ENCODE measurements at regions of chr19 and their contacts with region 1.

Region 1: DNA sequence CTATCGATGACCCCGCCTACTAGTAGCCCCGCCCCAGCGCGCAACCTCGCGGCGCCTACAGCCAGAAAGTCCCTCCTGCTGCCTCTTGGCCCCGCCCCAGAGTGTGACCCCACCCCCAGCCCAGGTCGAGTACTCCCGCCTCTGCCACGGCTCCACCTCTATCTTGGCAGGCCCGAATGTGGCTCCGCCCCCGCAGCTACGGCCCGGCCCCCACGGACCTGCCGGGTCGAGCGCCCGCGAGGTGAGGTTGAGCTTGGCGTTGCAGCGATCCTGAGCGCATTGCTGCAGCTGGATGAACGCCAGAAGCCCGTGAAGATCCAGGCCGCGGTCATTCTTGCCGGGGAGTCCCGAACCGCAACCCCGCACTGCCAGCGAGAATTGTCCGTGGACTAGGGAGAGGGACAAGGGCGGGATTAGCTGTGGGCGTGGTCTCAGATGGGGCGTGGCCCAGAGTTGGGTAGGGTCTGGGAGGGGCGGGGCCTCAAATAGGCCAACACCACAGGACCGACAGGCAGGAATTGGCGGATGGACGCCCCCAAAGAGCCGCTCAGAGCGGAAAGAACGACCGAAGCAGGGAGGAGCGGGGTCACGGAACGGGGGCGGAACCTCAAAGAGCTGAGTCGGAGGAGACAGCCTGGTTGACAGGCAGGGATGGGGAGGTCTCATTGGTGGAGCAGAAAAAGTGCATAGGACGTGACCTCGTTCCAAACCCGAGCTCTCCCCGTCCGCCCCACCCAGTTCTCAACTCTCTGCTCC is 1.8 kb downstream of the LYPD3 start:
- DNase-seq: peak; percentile 99
- H3K4me3 ChIP-seq: peak overlapping the region; percentile 57 to 68 (median 64)
- H3K27ac ChIP-seq: peak overlapping the region; percentile 66 to 92 (median 87)
- H3K4me1 ChIP-seq: peaks cover 7 to 33% (median 20%) of the 10 kb centered on the region in 4 donors
- H3K27me3 ChIP-seq: peaks cover 0 to 12% (median 0%) of the 10 kb centered on the region in 3 donors
- CTCF ChIP-seq: no peak
- EP300 ChIP-seq: no peak
- POLR2A ChIP-seq: no peak

Region 2: DNA sequence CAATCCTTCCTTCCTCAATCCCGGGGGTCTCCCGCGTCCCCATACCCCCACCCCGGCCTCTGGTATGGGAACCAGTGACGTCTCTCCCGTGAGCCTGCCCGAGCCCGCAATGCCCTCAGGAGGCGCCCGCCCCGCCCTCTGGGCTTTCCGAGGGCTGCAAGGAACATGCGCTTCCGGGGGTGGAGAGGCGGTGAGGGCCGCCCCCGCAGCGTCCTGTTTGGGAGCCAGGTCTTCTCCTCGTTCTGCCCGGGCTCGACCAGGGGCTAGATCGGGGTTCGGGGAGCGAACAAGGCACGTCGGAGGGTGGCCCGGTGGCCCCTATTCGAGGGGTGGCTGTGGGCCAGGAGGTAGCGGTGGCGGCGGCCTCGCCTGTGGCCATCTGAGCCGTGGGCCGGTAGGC is 55.5 kb before region 1 on chr19:
- intact Hi-C with region 1: no loop called
- DNase-seq: no peak
- H3K4me3 ChIP-seq: no peak overlapping the region
- H3K27ac ChIP-seq: no peak overlapping the region
- H3K4me1 ChIP-seq: peaks cover 0 to 2% (median 0%) of the 10 kb centered on the region in 4 donors
- H3K27me3 ChIP-seq: peaks cover 0 to 5% (median 0%) of the 10 kb centered on the region in 3 donors
- CTCF ChIP-seq: no peak
- EP300 ChIP-seq: no peak
- POLR2A ChIP-seq: no peak

Region 3: GRCh38 chr19:43596842-43597461 is 133.4 kb after region 1 on chr19:
- intact Hi-C with region 1: no loop called
- DNase-seq: peak in 1 of 2 donors; percentile 30
- H3K4me3 ChIP-seq: peak overlapping the region; percentile 62 to 74 (median 67)
- H3K27ac ChIP-seq: peak overlapping the region; percentile 90 to 96 (median 96)
- H3K4me1 ChIP-seq: peaks cover 34 to 63% (median 54%) of the 10 kb centered on the region in 4 donors
- H3K27me3 ChIP-seq: no peaks in the 10 kb centered on the region
- CTCF ChIP-seq: no peak
- EP300 ChIP-seq: no peak
- POLR2A ChIP-seq: no peak

Region 4: GRCh38 chr19:43668406-43669158 is 205.0 kb after region 1 on chr19:
- intact Hi-C with region 1: loop called (anchors 10 kb)
- DNase-seq: peak; percentile 98
- H3K4me3 ChIP-seq: peak overlapping the region; percentile 51 to 62 (median 56)
- H3K27ac ChIP-seq: peak overlapping the region; percentile 85 to 98 (median 96)
- H3K4me1 ChIP-seq: peaks cover 7 to 76% (median 28%) of the 10 kb centered on the region in 4 donors
- H3K27me3 ChIP-seq: no peaks in the 10 kb centered on the region
- CTCF ChIP-seq: no peak
- EP300 ChIP-seq: peak; percentile 43
- POLR2A ChIP-seq: peak in 2 of 4 donors; percentile 59 to 80